Activated CD4-positive, alpha-beta T cell treated with anti-CD3 and anti-CD28 coated beads, Interleukin-2, amount 10 ng/mL, durations not matched to agents 24 days and 14 days (primary cell): ENCODE measurements at regions of chr5 and their contacts with region 1.

Region 1: GRCh38 chr5:112154940-112155686 is 264.0 kb downstream of the EPB41L4A start:
- DNase-seq: peak; percentile 53
- H3K4me3 Mint-ChIP-seq: peak overlapping the region; percentile 31
- H3K27ac Mint-ChIP-seq: peak overlapping the region; percentile 63
- H3K4me1 Mint-ChIP-seq: peaks cover 11% of the 10 kb centered on the region
- H3K27me3 Mint-ChIP-seq: peaks cover 7% of the 10 kb centered on the region

Region 2: GRCh38 chr5:110751902-110752762 is 1403.0 kb before region 1 on chr5:
- intact Hi-C with region 1: loop called (anchors 5 kb)
- DNase-seq: peak; percentile 85
- H3K4me3 Mint-ChIP-seq: peak overlapping the region; percentile 62
- H3K27ac Mint-ChIP-seq: peak overlapping the region; percentile 93
- H3K4me1 Mint-ChIP-seq: peaks cover 42% of the 10 kb centered on the region
- H3K27me3 Mint-ChIP-seq: no peaks in the 10 kb centered on the region

Region 3: DNA sequence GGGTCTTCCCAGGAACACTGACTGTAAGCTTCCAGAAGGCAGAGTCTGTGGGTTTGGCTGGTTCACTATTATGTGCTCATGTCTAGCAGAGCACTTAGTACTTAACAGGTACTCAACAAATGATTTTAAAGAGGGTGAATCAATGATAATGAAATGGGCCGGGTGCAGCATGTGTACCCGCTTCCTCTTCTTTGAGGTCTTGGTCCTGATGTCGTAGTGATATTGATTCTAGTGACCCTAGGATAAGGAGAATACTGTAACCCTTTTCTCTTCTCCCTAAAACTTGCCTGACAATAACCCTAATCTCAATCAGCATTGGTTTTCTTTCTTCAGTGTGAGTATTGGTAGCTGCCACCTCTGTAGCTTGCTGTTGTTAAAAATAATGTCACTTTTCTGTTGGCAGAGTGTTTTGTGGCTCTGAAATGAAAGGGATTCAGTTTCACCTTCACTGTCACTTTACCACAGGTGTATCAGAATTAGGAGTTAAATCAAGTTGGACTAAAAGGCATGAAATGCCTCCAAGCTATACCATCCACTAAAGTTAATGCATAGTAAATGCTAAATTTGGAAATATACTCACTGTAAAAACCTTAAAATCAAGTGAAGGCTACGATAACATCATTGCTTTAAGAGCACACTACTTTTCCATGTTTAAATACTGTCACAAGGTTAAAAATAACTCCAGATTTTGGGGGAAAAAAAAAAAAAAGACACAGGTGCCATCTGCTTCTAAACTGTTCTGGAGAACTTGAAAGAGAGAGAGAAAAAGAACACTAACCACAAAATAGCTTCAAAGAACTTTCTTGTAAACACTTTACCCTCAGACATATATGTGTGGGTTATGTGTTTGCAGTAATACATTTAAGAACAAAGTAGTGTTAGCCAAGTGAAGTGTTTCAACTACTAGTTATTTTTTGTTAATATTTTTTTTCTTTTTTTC is 925.0 kb before region 1 on chr5:
- intact Hi-C with region 1: loop called (anchors 5 kb)
- DNase-seq: peak; percentile 75
- H3K4me3 Mint-ChIP-seq: peak overlapping the region; percentile 86
- H3K27ac Mint-ChIP-seq: peak overlapping the region; percentile 98
- H3K4me1 Mint-ChIP-seq: peaks cover 74% of the 10 kb centered on the region
- H3K27me3 Mint-ChIP-seq: no peaks in the 10 kb centered on the region

Region 4: GRCh38 chr5:111313017-111313724 is 841.9 kb before region 1 on chr5:
- intact Hi-C with region 1: loop called (anchors 10 kb)
- DNase-seq: no peak
- H3K4me3 Mint-ChIP-seq: no peak overlapping the region
- H3K27ac Mint-ChIP-seq: peak overlapping the region; percentile 44
- H3K4me1 Mint-ChIP-seq: peaks cover 28% of the 10 kb centered on the region
- H3K27me3 Mint-ChIP-seq: no peaks in the 10 kb centered on the region

Region 5: GRCh38 chr5:111742177-111742994 is 412.7 kb before region 1 on chr5:
- intact Hi-C with region 1: loop called (anchors 5 kb)
- DNase-seq: no peak
- H3K4me3 Mint-ChIP-seq: peak overlapping the region; percentile 75
- H3K27ac Mint-ChIP-seq: peak overlapping the region; percentile 54
- H3K4me1 Mint-ChIP-seq: peaks cover 37% of the 10 kb centered on the region
- H3K27me3 Mint-ChIP-seq: no peaks in the 10 kb centered on the region